CD4-positive, alpha-beta T cell (primary cell): ENCODE measurements at regions of chr11 and their contacts with region 1.

Region 1: GRCh38 chr11:28599656-28600055 is 491.5 kb downstream of the METTL15 start:
- DNase-seq: no peak
- ATAC-seq: no peak
- H3K4me3 ChIP-seq: no peak overlapping the region
- H3K4me3 Mint-ChIP-seq: no peak overlapping the region
- H3K27ac ChIP-seq: no peak overlapping the region
- H3K27ac Mint-ChIP-seq: no peak overlapping the region
- H3K4me1 ChIP-seq: no peaks in the 10 kb centered on the region
- H3K4me1 Mint-ChIP-seq: no peaks in the 10 kb centered on the region
- H3K27me3 ChIP-seq: no peaks in the 10 kb centered on the region
- H3K27me3 Mint-ChIP-seq: no peaks in the 10 kb centered on the region
- CTCF ChIP-seq: no peak

Region 2: GRCh38 chr11:28009388-28009787 is 590.3 kb before region 1 on chr11:
- CTCF ChIA-PET with region 1: no interaction called
- POLR2A ChIA-PET with region 1: no interaction called
- intact Hi-C with region 1: no loop called
- DNase-seq: no peak
- ATAC-seq: no peak
- H3K4me3 ChIP-seq: no peak overlapping the region
- H3K4me3 Mint-ChIP-seq: no peak overlapping the region
- H3K27ac ChIP-seq: no peak overlapping the region
- H3K27ac Mint-ChIP-seq: no peak overlapping the region
- H3K4me1 ChIP-seq: no peaks in the 10 kb centered on the region
- H3K4me1 Mint-ChIP-seq: no peaks in the 10 kb centered on the region
- H3K27me3 ChIP-seq: no peaks in the 10 kb centered on the region
- H3K27me3 Mint-ChIP-seq: no peaks in the 10 kb centered on the region
- CTCF ChIP-seq: no peak

Region 3: GRCh38 chr11:28505210-28505609 is 94.4 kb before region 1 on chr11:
- CTCF ChIA-PET with region 1: no interaction called
- POLR2A ChIA-PET with region 1: no interaction called
- intact Hi-C with region 1: no loop called
- DNase-seq: no peak
- ATAC-seq: no peak
- H3K4me3 ChIP-seq: no peak overlapping the region
- H3K4me3 Mint-ChIP-seq: no peak overlapping the region
- H3K27ac ChIP-seq: no peak overlapping the region
- H3K27ac Mint-ChIP-seq: no peak overlapping the region
- H3K4me1 ChIP-seq: no peaks in the 10 kb centered on the region
- H3K4me1 Mint-ChIP-seq: no peaks in the 10 kb centered on the region
- H3K27me3 ChIP-seq: no peaks in the 10 kb centered on the region
- H3K27me3 Mint-ChIP-seq: no peaks in the 10 kb centered on the region
- CTCF ChIP-seq: no peak

Region 4: DNA sequence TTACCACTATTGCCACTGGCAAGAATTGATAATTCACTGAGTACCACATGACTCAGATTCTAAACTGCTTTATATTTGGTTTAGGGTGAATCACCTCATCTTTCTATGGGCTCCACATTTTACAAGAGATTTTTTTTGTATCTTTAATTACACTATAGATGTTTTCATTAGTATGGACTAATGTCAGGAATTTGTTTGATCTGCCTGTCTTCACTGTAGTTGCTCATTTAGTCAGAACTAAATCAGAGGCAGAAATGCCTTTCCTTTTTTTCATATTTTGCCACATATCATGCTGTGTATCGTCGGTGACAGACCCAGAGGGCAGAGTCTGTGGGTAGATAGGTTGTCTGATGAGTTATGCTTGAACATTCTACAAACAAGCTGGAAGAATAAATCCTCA is 32.7 kb after region 1 on chr11:
- CTCF ChIA-PET with region 1: no interaction called
- POLR2A ChIA-PET with region 1: no interaction called
- intact Hi-C with region 1: loop called in 1 of 2 experiments (anchors 1 kb)
- DNase-seq: no peak
- ATAC-seq: no peak
- H3K4me3 ChIP-seq: no peak overlapping the region
- H3K4me3 Mint-ChIP-seq: no peak overlapping the region
- H3K27ac ChIP-seq: no peak overlapping the region
- H3K27ac Mint-ChIP-seq: no peak overlapping the region
- H3K4me1 ChIP-seq: no peaks in the 10 kb centered on the region
- H3K4me1 Mint-ChIP-seq: no peaks in the 10 kb centered on the region
- H3K27me3 ChIP-seq: no peaks in the 10 kb centered on the region
- H3K27me3 Mint-ChIP-seq: no peaks in the 10 kb centered on the region
- CTCF ChIP-seq: no peak